GM12878 (cell line): ENCODE measurements at regions of chr5 and their contacts with region 1.

Region 1: GRCh38 chr5:16585041-16585667 is 31.6 kb downstream of the RETREG1 start:
- DNase-seq: no peak
- ATAC-seq: peak; percentile 79
- H3K4me3 ChIP-seq: no peak overlapping the region
- H3K27ac ChIP-seq: no peak overlapping the region
- H3K4me1 ChIP-seq: no peaks in the 10 kb centered on the region; the same call in 1 of the 2 replicates
- H3K27me3 ChIP-seq: no peaks in the 10 kb centered on the region
- CTCF ChIP-seq: peak; percentile 37 to 52 (median 47); a peak in 5 of 6 replicates
- EP300 ChIP-seq: no peak
- POLR2A ChIP-seq: no peak
- RAD21 ChIP-seq: 0 out of 2 replicates have a peak, but pooled peaks have one; percentile 9

Region 2: DNA sequence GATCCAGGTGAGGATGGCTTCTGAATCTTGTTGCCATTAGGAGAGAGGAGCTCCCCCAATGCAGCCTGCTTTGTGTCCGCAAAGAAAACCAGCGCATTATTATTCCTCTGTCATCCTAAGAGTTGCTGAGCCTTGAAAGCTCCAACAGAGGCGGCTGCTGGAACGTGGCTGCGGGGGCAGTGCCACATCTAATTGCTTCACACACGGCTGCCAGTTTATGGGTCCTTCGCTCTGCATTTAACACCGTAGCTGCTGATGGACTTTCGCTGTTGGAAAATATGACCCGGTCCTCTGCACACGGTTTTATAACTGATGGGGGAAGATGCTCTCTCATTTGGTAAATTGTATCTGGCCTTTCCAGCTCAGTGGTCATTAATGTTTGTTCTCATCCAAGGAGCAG is 157.6 kb before region 1 on chr5:
- CTCF ChIA-PET with region 1: no interaction called
- POLR2A ChIA-PET with region 1: no interaction called
- RAD21 ChIA-PET with region 1: no interaction called
- SMC1A ChIA-PET with region 1: no interaction called
- in situ Hi-C with region 1: no loop called
- intact Hi-C with region 1: no loop called
- DNase-seq: no peak
- ATAC-seq: no peak
- H3K4me3 ChIP-seq: no peak overlapping the region
- H3K27ac ChIP-seq: no peak overlapping the region
- H3K4me1 ChIP-seq: no peaks in the 10 kb centered on the region
- H3K27me3 ChIP-seq: no peaks in the 10 kb centered on the region
- CTCF ChIP-seq: no peak
- EP300 ChIP-seq: no peak
- POLR2A ChIP-seq: no peak
- RAD21 ChIP-seq: no peak

Region 3: GRCh38 chr5:16564248-16564867 is 20.8 kb before region 1 on chr5:
- CTCF ChIA-PET with region 1: interaction called, 10 read pairs
- POLR2A ChIA-PET with region 1: no interaction called
- RAD21 ChIA-PET with region 1: no interaction called
- SMC1A ChIA-PET with region 1: no interaction called
- in situ Hi-C with region 1: no loop called
- intact Hi-C with region 1: no loop called
- DNase-seq: no peak
- ATAC-seq: no peak
- H3K4me3 ChIP-seq: no peak overlapping the region
- H3K27ac ChIP-seq: no peak overlapping the region
- H3K4me1 ChIP-seq: no peaks in the 10 kb centered on the region
- H3K27me3 ChIP-seq: no peaks in the 10 kb centered on the region
- CTCF ChIP-seq: no peak
- EP300 ChIP-seq: no peak
- POLR2A ChIP-seq: no peak
- RAD21 ChIP-seq: no peak